ENCODE measurements at regions of chr12 and their contacts with region 1.

Region 1: DNA sequence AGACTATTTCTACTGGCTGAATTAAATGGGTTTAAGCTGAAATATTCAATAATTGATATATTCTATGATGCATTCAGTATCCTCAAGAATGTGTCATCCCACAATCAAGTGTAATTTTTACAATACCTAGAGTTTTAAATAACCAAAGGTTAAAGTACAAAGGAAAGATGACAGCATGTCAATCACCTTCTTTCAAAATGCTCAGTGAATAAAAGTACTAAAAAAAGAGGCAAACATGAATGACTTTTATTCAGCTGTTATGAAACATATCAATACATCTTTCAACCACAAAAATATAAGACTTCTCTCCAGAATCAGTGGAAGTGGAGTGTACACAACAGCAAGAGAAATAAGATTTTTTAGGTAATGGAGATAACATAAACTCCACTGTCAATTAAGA is 72.0 kb downstream of the NELL2 start:
- DNase-seq: no peak
- ATAC-seq: no peak
- H3K4me3 Mint-ChIP-seq: no peak overlapping the region
- H3K27ac Mint-ChIP-seq: no peak overlapping the region
- H3K4me1 Mint-ChIP-seq: peaks cover 4% of the 10 kb centered on the region
- H3K27me3 Mint-ChIP-seq: no peaks in the 10 kb centered on the region

Region 2: DNA sequence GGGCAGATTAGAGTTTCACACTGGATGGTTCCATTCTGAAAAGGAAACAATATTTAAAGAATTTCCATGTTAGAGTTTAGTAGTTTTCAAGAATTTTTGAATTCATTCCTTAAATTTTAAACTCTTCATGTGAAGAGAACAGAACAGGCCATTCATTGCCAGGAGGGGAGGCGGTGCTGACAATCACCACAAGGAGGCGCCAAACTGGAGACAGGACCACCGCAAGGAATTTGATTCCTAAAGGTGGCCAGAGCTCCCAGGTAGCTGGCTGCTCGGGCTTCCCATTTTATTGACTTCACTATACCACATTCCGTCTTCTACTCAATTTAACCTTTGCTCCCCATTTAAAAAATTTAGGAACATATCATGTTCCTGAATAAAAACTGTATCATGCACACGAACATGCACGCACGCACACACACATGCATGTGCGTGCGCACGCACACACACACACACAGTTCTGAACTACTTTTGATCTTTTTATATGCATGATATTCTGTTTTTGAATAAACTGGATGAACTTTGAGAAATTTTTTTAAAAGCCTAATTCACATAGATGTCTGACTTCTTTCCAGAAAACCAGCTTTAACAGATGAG is 29.2 kb before region 1 on chr12:
- CTCF ChIA-PET with region 1: interaction called, 11 read pairs
- POLR2A ChIA-PET with region 1: no interaction called
- DNase-seq: peak; percentile 72
- ATAC-seq: peak; percentile 57
- H3K4me3 Mint-ChIP-seq: no peak overlapping the region
- H3K27ac Mint-ChIP-seq: no peak overlapping the region
- H3K4me1 Mint-ChIP-seq: peaks cover 7% of the 10 kb centered on the region
- H3K27me3 Mint-ChIP-seq: no peaks in the 10 kb centered on the region

Region 3: GRCh38 chr12:44847888-44848702 is 44.0 kb after region 1 on chr12:
- CTCF ChIA-PET with region 1: no interaction called
- POLR2A ChIA-PET with region 1: no interaction called
- DNase-seq: peak; percentile 86
- ATAC-seq: peak; percentile 90
- H3K4me3 Mint-ChIP-seq: peak overlapping the region; percentile 61
- H3K27ac Mint-ChIP-seq: peak overlapping the region; percentile 96
- H3K4me1 Mint-ChIP-seq: peaks cover 88% of the 10 kb centered on the region
- H3K27me3 Mint-ChIP-seq: no peaks in the 10 kb centered on the region